Panc1 (cell line): ENCODE measurements at regions of chr12 and their contacts with region 1.

Region 1: GRCh38 chr12:76898442-76898841 is 19.6 kb upstream of the CSRP2 start:
- DNase-seq: no peak
- ATAC-seq: no peak
- H3K4me3 ChIP-seq: no peak overlapping the region
- H3K27ac ChIP-seq: no peak overlapping the region
- H3K4me1 ChIP-seq: no peaks in the 10 kb centered on the region
- H3K27me3 ChIP-seq: no peaks in the 10 kb centered on the region
- CTCF ChIP-seq: no peak

Region 2: GRCh38 chr12:76855271-76855670 is 43.2 kb before region 1 on chr12:
- CTCF ChIA-PET with region 1: interaction called, 16 read pairs
- POLR2A ChIA-PET with region 1: no interaction called
- in situ Hi-C with region 1: no loop called
- intact Hi-C with region 1: no loop called
- DNase-seq: no peak
- ATAC-seq: no peak
- H3K4me3 ChIP-seq: no peak overlapping the region
- H3K27ac ChIP-seq: no peak overlapping the region
- H3K4me1 ChIP-seq: no peaks in the 10 kb centered on the region
- H3K27me3 ChIP-seq: no peaks in the 10 kb centered on the region
- CTCF ChIP-seq: no peak